ENCODE measurements at regions of chr11 and their contacts with region 1.

Region 1: GRCh38 chr11:114262681-114263512 is 33.3 kb upstream of the NNMT start:
- DNase-seq: peak; percentile 46 to 48
- H3K4me3 ChIP-seq: no peak overlapping the region
- H3K27ac ChIP-seq: no peak overlapping the region
- H3K4me1 ChIP-seq: peaks cover 24 to 29% of the 10 kb centered on the region in 2 donors
- H3K27me3 ChIP-seq: no peaks in the 10 kb centered on the region
- CTCF ChIP-seq: peak; percentile 28 to 75 (median 60)
- POLR2A ChIP-seq: no peak

Region 2: GRCh38 chr11:113896156-113896879 is 366.6 kb before region 1 on chr11:
- intact Hi-C with region 1: loop called (anchors 5 kb)
- DNase-seq: peak; percentile 41 to 49
- H3K4me3 ChIP-seq: no peak overlapping the region
- H3K27ac ChIP-seq: peak overlapping the region in 1 of 3 donors; percentile 15
- H3K4me1 ChIP-seq: peaks cover 8 to 20% of the 10 kb centered on the region in 2 donors
- H3K27me3 ChIP-seq: no peaks in the 10 kb centered on the region
- CTCF ChIP-seq: peak; percentile 31 to 68 (median 64)
- POLR2A ChIP-seq: no peak

Region 3: GRCh38 chr11:113994077-113994954 is 268.6 kb before region 1 on chr11:
- intact Hi-C with region 1: loop called (anchors 2 kb)
- DNase-seq: peak in 1 of 2 donors; percentile 11
- H3K4me3 ChIP-seq: no peak overlapping the region
- H3K27ac ChIP-seq: no peak overlapping the region
- H3K4me1 ChIP-seq: peaks cover 0 to 6% of the 10 kb centered on the region in 2 donors
- H3K27me3 ChIP-seq: no peaks in the 10 kb centered on the region
- CTCF ChIP-seq: peak; percentile 21 to 79 (median 58)
- POLR2A ChIP-seq: no peak

Region 4: DNA sequence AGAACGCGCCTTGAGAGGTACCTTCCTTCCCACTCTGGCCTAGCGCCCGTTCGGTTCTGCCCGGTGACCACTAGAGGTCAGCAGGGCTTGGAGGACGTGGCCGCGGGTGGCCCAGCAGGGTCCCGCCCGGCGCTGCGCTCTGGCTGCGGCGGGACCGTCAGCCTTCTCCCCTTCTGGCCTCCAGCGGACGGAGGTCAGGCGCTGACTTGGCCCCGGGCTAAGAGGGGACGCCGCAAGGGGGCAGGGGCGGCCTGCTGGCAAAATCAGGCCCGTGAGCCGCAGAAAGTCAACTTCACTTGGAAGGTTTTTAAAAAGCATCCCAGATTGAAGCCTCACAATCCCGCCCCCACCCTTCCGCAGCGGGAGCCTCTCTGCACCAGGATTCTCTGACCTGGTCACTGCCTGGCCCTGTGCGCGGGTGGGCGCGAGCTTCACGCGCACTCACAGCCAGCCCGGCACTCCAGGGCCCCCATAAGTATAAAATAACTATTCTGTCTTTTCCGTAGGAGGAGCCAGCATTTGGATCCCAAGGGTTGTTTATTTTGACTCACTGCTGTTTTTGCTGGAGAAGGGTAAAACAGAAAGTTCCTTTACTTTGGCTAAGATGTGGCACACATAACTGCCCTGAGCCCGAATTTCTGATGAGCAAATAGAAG is 226.6 kb before region 1 on chr11:
- intact Hi-C with region 1: loop called (anchors 5 kb)
- DNase-seq: peak; percentile 91 to 95
- H3K4me3 ChIP-seq: peak overlapping the region in 1 of 3 donors; percentile 17
- H3K27ac ChIP-seq: peak overlapping the region; percentile 64 to 94 (median 80)
- H3K4me1 ChIP-seq: peaks cover 23 to 27% of the 10 kb centered on the region in 2 donors
- H3K27me3 ChIP-seq: no peaks in the 10 kb centered on the region
- CTCF ChIP-seq: peak; percentile 78 to 97 (median 92)
- POLR2A ChIP-seq: peak in 1 of 2 donors; percentile 47

Region 5: GRCh38 chr11:114059278-114059983 is 203.5 kb before region 1 on chr11 and contains the start of gene ZBTB16:
- intact Hi-C with region 1: loop called (anchors 5 kb)
- DNase-seq: peak; percentile 90
- H3K4me3 ChIP-seq: peak within 1 kb of the TSS; percentile 88 to 98 (median 94)
- H3K27ac ChIP-seq: peak within 1 kb of the TSS; percentile 100
- H3K4me1 ChIP-seq: peaks cover 34 to 55% of the 10 kb centered on the region in 2 donors
- H3K27me3 ChIP-seq: no peaks in the 10 kb centered on the region
- CTCF ChIP-seq: peak in 5 of 6 experiments; percentile 10 to 62 (median 31)
- POLR2A ChIP-seq: peak; percentile 57 to 98
- total RNA-seq, gene ZBTB16: 157 to 385 (median 177) TPM